ENCODE measurements at regions of chr13 and their contacts with region 1.

Region 1: DNA sequence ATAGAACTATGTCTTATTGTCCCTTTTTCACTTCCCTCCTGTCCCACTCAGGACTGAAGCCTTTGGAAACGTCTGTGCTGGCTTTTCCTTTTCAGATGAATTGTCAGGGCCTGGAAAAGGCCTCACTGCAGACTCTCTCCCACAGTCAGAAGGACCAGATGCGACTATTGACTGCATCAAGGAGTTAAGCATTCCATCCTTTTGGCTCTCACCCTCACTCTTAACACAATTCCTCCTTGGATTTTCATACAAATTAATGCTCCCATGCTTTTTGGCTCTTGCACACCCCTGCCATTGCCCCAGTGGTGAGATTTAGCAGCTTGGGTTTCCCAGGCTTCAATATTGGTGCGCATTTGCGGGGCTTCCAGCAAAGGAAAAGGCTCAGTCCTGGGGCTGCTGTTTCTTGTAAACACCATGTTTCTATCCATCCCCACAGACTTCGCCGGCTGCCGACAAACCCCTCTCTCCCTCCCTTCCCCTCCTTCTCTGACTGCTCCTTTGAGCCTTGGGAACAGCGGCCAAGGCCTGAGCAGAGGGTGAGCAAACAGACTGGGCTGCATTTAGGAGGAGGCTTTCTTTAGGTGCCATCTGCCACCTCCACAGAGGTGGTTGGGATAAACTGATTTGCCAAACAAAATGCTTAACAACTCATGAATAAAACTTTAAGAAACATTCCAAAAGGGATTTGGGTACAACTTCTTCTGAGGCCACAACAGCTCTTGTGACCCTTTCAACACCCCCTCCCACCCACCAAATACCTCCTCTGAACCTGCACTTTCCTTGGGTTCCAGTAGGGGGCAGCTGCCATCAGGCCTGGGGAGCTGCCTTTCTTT is 48.6 kb upstream of the PCDH8 start:
- DNase-seq: no peak
- ATAC-seq: no peak
- H3K4me3 ChIP-seq: no peak overlapping the region
- H3K4me3 Mint-ChIP-seq: no peak overlapping the region
- H3K27ac ChIP-seq: no peak overlapping the region
- H3K27ac Mint-ChIP-seq: no peak overlapping the region
- H3K4me1 ChIP-seq: no peaks in the 10 kb centered on the region
- H3K4me1 Mint-ChIP-seq: no peaks in the 10 kb centered on the region
- H3K27me3 ChIP-seq: no peaks in the 10 kb centered on the region
- H3K27me3 Mint-ChIP-seq: peaks cover 4 to 6% of the 10 kb centered on the region in 2 donors
- CTCF ChIP-seq: peak; percentile 34

Region 2: DNA sequence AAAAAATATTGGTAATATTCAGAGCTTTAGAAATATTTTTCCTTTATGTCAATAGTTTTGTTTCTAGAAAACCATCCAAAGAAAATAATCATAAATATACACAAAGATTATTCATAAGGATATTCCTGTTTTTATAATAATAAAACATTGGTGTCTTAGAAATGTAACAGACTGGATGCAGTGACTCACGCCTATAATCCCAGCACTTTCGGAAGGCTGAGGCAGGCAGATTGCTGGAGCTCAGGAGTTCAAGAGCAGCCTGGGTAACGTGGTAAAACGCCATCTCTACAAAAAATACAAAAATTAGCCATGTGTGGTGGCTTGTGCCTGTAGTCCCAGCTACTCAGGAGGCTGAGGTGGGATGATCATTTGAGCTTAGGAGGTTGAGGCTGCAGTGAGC is 1199.9 kb before region 1 on chr13:
- intact Hi-C with region 1: no loop called
- DNase-seq: no peak
- ATAC-seq: no peak
- H3K4me3 ChIP-seq: no peak overlapping the region
- H3K4me3 Mint-ChIP-seq: no peak overlapping the region
- H3K27ac ChIP-seq: no peak overlapping the region
- H3K27ac Mint-ChIP-seq: no peak overlapping the region
- H3K4me1 ChIP-seq: no peaks in the 10 kb centered on the region
- H3K4me1 Mint-ChIP-seq: peaks cover 3 to 6% of the 10 kb centered on the region in 2 donors
- H3K27me3 ChIP-seq: no peaks in the 10 kb centered on the region
- H3K27me3 Mint-ChIP-seq: no peaks in the 10 kb centered on the region
- CTCF ChIP-seq: no peak

Region 3: DNA sequence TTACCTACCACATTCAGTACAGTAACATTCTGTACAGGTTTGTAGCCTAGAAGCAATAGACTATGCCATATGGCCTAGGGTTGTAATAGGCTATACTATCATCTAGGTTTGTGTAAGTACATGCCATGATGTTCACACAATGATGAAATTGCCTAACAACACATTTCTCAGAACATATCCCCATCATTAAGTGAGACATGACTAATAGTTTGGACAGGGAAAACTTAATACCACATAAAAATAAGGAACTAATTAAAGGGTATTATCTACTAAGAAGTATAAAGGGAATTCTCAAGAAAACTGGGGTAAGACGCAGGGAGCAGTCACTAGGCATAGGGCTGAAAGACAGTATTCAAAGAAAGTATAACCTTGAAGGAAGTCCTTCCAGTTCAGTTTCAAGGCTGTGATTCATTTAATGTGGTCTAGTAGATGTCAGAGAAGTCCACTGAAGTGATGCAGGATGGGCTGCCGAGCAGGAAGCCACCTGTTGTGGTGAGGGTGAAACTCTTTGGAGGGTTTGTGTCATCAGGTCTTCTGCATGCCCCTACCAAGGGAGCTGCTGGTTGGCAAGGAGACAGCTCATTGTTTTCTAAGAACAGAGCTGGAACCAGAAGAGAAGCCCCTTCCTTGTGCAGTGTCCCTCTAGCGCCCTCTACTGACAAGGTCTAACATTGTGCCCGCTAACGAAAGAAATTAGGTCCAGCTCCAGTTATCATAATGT is 254.5 kb after region 1 on chr13:
- intact Hi-C with region 1: loop called (anchors 10 kb)
- DNase-seq: peak; percentile 16 to 44
- ATAC-seq: peak; percentile 76 to 82 (median 81)
- H3K4me3 ChIP-seq: no peak overlapping the region
- H3K4me3 Mint-ChIP-seq: no peak overlapping the region
- H3K27ac ChIP-seq: no peak overlapping the region
- H3K27ac Mint-ChIP-seq: no peak overlapping the region
- H3K4me1 ChIP-seq: no peaks in the 10 kb centered on the region
- H3K4me1 Mint-ChIP-seq: peaks cover 0 to 5% of the 10 kb centered on the region in 2 donors
- H3K27me3 ChIP-seq: no peaks in the 10 kb centered on the region
- H3K27me3 Mint-ChIP-seq: peaks cover 0 to 8% of the 10 kb centered on the region in 2 donors
- CTCF ChIP-seq: peak; percentile 68